GM10248 (cell line): ENCODE measurements at regions of chr22 and their contacts with region 1.

Region 1: DNA sequence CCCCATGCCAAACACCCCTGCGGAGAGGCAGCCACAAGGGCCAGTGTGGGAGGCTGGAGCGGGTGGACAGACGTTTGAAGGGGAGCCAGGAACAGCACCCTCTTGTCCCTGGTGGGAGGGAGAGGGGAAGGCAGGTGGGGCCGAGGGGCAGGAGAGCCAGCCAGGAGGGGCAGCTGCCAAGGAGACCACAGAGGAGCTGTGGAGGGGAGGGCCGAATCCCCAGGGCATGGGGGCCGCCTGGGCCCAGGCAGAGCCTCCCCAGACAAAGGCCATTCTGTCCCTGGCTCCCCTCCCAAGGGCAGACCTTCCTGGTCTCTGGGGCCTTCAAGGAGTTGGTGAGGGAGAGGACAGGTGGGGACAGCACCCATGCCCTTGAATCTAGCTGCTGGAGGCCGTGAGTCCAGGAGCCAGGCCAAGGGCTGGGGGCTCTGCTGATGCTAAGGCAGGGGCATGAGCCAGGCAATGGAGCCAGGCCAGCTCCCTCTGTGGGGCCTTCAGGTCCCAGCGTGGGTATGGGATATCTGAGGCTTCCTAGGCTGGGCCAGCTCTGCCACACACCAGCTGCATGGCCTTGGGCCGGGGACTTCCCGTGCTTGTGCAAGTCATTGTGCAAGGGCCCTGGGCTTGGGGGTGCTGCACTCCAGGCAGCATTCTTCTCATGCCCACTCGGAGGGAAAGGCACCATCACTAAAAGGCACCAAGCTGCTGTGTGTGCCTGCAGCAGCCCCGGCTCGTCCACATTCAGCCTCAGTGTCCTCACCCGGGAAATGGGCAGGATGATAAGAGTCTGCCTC is 11.4 kb downstream of the EMID1 start:
- DNase-seq: no peak
- CTCF ChIP-seq: no peak

Region 2: DNA sequence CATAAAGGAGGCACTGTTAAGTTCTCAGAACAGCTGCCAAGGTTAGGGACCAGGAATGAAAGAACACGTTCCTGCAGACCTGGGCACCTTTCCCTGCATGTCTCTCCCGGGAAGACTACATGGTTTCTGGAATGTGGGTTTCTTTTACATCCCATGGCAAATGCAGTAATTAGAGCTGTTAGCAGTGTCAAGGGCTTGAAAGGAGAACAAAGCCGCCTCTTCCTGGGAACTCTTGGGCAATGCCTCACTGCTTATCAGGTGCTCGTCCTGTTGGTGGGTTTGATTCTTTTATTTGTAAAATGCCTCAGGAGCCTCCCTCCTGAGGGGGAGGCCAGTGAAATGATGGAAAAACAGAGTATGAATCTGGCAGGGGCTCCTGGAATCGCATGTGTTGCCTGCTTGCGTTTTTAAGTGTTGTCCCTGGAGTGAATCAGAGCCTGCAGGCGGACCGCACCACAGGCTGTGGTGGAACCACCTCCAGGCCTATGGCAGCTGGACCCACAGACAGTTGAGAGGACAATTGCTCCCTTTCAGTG is 154.7 kb before region 1 on chr22:
- CTCF ChIA-PET with region 1: no interaction called
- POLR2A ChIA-PET with region 1: no interaction called
- DNase-seq: no peak
- CTCF ChIP-seq: no peak

Region 3: DNA sequence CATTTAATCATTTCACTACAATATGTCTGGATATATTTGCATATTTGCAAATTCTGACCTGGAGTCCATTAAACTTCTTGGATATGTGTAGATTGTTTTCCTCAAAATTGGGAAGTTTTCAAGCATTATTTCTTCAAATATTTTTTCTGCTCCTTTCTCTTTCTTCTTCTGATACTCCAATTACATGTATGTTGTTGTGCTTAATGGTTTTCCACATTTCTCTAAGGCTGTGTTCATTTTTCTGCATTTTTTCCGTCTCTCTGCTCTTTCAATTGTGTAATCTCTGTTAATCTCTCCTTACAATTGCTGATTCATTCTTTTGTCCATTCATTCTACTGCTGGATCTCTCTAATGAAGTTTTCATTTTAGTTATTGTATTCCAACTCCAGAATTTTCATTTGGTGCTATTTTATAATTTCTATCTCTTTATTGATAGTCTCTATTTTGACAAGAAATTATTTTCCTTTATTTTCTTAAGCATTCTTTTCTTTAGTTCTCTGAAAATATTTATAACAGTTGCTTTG is 41.7 kb before region 1 on chr22:
- CTCF ChIA-PET with region 1: no interaction called
- POLR2A ChIA-PET with region 1: no interaction called
- DNase-seq: no peak
- CTCF ChIP-seq: no peak

Region 4: DNA sequence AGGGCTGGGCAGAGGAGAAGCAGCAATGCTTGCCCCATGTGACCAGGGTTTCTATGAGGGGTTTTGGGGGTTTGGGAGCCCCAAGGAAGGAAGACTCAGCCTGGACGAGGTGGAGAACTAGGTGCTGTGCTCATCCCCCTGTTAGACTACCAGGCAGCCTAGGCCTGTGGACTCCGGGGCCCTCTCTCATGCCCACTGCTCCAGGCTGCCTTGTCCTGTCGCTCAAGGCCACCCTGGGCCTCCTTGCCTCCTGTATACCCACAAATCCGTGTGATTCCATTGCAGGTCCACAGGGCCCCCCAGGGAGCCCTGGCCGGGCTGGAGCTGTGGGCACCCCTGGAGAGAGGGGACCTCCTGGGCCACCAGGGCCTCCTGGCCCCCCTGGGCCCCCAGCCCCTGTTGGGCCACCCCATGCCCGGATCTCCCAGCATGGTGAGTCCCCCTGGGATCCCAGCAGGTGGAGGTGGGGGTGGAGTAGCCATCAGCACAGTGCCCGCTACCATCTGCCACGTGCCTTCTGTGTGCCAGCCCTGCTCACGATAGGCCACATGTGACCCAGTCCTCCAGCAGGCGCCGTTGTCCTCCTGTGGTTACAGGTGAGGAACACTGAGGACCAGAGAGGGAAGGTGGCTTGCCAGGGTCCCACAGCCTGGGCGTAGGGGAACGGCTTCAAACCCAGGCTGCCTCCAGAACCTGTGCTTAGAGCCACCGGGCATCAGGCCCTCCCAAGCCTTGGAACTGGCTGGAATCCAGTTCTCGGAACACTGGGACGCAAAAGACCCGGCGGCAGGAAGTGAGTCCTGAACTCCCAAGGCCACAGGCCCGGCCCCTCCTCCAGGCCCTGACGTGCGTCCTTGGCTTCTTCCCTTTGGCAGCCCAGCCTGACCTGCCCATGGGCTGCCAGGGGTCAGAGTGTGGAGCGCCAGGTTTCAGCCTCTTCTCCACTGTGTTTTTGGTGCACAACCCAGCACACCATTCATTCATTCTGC is 15.2 kb after region 1 on chr22:
- CTCF ChIA-PET with region 1: interaction called, 10 read pairs
- POLR2A ChIA-PET with region 1: no interaction called
- DNase-seq: no peak
- CTCF ChIP-seq: no peak

Region 5: DNA sequence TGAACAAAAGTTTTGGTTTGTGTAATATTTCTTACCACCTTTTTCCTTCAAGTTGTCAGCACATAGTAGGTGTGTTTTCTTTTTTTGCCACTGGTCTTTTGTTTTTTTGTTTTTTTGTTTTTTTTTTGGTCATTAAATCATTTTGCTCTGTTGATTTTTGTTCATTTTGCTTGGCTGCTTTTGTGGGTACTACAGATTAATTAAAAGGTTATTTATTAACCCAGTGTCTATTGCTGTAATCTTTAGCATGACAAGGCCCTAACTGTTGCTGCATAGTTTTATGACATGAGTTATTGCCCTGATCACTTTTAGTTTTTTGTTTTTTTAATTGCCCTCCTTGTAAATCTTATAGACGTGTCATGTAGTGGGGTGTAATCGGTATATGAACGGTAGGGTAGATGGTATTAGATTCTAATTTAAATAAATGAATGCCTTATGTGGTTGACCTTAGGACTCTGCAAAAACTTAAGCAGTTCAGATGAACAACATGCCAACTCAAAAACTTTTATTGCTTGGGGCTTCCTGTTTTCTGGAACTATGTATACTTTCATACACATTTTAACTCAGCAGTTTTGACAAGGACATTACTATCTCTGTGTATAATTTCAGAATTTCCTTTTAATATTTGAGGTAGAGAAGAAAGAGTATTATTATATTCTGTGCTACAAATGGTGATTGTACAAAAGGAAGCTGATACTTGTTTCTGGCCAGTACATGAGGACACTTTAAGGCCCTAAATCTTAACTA is 58.9 kb after region 1 on chr22:
- CTCF ChIA-PET with region 1: no interaction called
- POLR2A ChIA-PET with region 1: no interaction called
- DNase-seq: no peak
- CTCF ChIP-seq: no peak